KBM-7 (cell line): ENCODE measurements at regions of chr16 and their contacts with region 1.

Region 1: DNA sequence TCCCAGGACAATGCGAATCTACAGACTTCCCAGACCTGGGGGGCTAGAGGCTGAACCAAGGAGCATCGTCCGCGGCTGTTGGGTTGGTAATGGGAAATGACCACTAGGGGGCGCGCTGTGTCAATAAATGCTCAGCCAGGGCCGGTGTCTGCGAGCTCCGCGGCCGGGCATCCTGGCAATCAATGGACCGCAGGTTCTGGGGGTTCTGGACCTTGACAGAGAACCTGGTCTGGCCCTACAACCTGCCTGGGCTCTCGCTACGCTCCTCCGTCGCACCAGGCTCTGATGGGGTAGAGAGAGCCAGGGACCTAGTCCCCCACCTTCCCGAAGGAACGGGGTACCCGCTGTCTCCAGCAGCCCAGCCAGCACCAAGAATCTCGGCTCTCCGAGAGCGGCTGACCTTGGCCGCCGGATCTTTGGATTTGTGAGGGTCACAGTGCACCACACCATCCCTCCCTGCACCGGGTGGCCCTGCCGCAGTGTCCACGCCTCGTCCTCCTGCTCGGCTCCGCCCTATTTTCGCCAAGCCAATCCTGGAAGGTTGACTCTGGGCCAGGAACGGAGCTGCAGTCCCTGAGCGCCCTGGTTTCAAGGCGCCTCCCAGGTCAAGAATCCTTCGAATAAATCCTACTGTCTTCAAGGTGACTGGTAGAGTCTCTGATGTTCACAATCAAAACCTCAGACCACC is 20.4 kb upstream of the BEAN1 start:
- DNase-seq: peak; percentile 81

Region 2: GRCh38 chr16:66065925-66066324 is 340.8 kb before region 1 on chr16:
- in situ Hi-C with region 1: no loop called
- DNase-seq: no peak

Region 3: DNA sequence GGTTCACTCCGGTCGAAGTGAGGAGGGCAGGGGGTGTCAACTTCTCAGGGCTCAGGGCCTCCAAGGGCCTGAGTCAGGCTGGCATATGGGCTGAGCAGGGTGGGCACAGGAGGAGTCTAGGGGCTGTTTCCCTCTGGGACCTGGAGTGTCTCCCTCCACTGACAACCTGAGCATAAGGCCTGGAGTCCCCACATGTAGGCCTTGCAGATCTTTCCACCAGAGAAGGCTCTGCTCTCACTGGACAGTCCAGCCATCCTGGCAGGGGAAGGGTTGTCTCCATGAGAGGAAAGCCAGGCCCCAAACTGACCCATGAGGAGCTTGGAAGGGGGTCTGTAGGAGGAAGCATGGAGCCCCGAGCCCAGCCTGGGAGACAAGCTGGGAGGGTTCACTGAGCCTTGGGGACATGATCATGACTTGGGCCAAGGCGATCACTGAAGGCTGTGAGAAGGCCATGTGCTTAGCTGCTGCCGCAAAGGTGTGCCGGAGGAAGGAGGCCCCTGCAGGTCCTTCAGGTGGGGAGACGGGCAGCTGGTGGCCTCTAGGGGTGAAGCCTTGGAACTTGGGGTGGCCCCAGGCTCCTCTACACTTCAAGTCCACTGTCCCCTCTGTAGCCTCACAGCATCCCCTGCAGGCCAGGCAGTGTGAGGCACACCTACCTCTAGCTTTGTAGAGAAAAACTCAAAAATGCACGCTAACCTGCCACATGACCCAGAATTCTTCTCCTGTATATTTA is 182.5 kb after region 1 on chr16:
- in situ Hi-C with region 1: loop called (anchors 25 kb)
- DNase-seq: peak; percentile 65

Region 4: GRCh38 chr16:66872943-66873684 is 466.4 kb after region 1 on chr16:
- in situ Hi-C with region 1: loop called (anchors 25 kb)
- DNase-seq: peak; percentile 100

Region 5: DNA sequence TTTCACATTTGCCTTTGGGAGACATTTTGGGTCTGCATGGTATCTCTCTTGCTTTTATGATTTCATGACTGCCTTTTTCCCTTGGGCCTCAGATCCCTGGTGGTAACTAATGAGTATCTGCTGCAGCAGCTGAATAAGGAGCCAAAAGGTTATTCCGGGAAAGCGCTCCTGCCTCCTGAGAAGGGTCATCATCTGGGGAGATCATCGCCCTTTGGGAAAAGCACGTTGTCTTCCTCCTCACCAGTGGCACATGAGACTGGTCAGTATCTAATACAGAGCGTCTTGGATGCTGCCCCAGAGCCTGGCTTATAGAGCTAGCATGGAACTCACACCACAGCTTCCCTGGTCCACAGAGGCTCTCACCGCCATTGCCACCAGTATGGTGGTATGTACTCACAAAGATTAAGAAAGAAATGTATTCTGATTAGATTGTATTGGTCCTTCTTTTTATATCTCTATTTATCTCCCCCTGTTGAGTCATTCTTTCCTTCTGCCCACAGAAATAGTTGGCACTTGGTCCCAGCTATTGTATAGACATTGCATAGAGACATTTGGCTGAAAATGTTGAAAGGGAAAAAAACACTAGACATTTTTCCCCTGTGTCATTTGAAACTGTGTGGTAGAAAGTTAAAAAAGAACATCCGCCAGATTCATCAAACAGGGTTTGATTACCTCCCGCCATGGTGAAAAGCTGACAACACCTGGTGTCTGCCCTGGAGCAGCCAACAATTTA is 978.3 kb after region 1 on chr16:
- in situ Hi-C with region 1: no loop called
- DNase-seq: no peak